Heart left ventricle (tissue), 16 donors: ENCODE measurements at regions of chr17 and their contacts with region 1.

Region 1: GRCh38 chr17:37089956-37090355 is 141.2 kb downstream of the AATF start:
- DNase-seq: no peak
- ATAC-seq: peak in 1 of 4 donors; percentile 85
- H3K4me3 ChIP-seq: no peak overlapping the region
- H3K27ac ChIP-seq: peak overlapping the region in 1 of 12 donors; percentile 81
- H3K4me1 ChIP-seq: peaks cover 0 to 24% (median 0%) of the 10 kb centered on the region in 12 donors
- H3K27me3 ChIP-seq: no peaks in the 10 kb centered on the region
- CTCF ChIP-seq: no peak
- POLR2A ChIP-seq: no peak

Region 2: DNA sequence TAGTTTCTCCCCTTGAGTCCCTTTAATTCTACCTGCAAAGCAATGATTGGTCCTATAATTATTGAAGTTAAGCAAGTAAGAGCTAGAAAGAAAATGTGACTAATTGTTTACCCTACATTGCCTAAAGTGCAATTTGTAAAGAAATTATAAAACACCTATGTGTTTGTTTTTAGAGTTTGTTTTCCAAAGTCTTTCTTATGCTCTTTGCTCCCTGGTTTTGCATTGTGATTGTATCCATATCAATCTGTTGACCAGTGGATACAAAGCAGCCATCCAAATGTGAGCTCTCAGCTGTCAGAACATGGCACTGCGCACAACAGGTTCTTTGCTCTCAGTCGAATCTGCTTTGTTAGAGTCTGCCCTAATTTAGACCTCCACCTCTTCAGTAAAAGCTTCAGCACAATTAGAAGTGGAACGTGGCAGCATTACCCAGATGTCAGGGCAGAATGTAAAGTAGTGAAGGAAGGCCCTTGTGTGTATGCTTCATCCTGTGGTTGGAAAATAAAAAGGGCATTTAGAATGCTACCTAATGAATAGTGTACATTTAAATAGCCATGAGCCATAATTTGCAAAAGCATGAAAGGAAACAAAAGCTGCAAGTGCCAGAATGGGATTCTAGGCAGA is 70.7 kb before region 1 on chr17:
- intact Hi-C with region 1: loop called in 1 of 10 experiments (anchors 10 kb)
- DNase-seq: no peak
- ATAC-seq: no peak
- H3K4me3 ChIP-seq: no peak overlapping the region
- H3K27ac ChIP-seq: no peak overlapping the region
- H3K4me1 ChIP-seq: peaks cover 0 to 12% (median 0%) of the 10 kb centered on the region in 12 donors
- H3K27me3 ChIP-seq: no peaks in the 10 kb centered on the region
- CTCF ChIP-seq: no peak
- POLR2A ChIP-seq: no peak

Region 3: GRCh38 chr17:37043201-37043600 is 46.8 kb before region 1 on chr17:
- intact Hi-C with region 1: no loop called
- DNase-seq: no peak
- ATAC-seq: no peak
- H3K4me3 ChIP-seq: no peak overlapping the region
- H3K27ac ChIP-seq: no peak overlapping the region
- H3K4me1 ChIP-seq: no peaks in the 10 kb centered on the region
- H3K27me3 ChIP-seq: no peaks in the 10 kb centered on the region
- CTCF ChIP-seq: no peak
- POLR2A ChIP-seq: no peak

Region 4: GRCh38 chr17:37147301-37147812 is 57.4 kb after region 1 on chr17:
- intact Hi-C with region 1: loop called in 1 of 10 experiments (anchors 10 kb)
- DNase-seq: no peak
- ATAC-seq: no peak
- H3K4me3 ChIP-seq: no peak overlapping the region
- H3K27ac ChIP-seq: no peak overlapping the region
- H3K4me1 ChIP-seq: peaks cover 0 to 5% (median 0%) of the 10 kb centered on the region in 12 donors
- H3K27me3 ChIP-seq: no peaks in the 10 kb centered on the region
- CTCF ChIP-seq: no peak
- POLR2A ChIP-seq: no peak

Region 5: DNA sequence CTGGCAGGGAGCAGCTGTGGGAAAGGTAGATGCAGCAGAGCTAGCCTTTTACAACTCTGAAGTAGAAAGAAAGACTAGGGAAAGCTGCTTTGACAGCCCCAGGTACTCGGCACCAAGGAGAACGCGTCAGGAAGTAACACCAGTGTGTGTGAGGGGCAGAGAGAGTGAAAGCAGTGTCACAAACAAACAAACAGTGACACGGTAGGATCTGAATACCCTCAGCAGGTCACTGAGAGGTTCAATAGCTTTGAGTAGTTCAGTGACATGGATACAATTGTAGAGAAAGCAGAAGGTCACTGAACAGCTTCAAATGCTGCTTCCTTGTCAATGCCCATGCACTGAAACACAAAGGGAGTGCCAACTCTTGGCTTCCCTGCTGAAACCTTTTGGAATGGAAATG is 135.5 kb after region 1 on chr17:
- intact Hi-C with region 1: no loop called
- DNase-seq: no peak
- ATAC-seq: no peak
- H3K4me3 ChIP-seq: no peak overlapping the region
- H3K27ac ChIP-seq: no peak overlapping the region
- H3K4me1 ChIP-seq: no peaks in the 10 kb centered on the region
- H3K27me3 ChIP-seq: no peaks in the 10 kb centered on the region
- CTCF ChIP-seq: no peak
- POLR2A ChIP-seq: no peak